ENCODE measurements at regions of chr3 and their contacts with region 1.

Region 1: GRCh38 chr3:9932843-9933560 is 632 bp upstream of the CRELD1 start:
- DNase-seq: peak; percentile 95
- ATAC-seq: peak; percentile 78
- H3K4me3 Mint-ChIP-seq: peak overlapping the region; percentile 83
- H3K27ac Mint-ChIP-seq: peak overlapping the region; percentile 91
- H3K4me1 Mint-ChIP-seq: peaks cover 32% of the 10 kb centered on the region
- H3K27me3 Mint-ChIP-seq: no peaks in the 10 kb centered on the region
- CTCF ChIP-seq: peak; percentile 85

Region 2: GRCh38 chr3:9649791-9650521 is 283.0 kb before region 1 on chr3:
- CTCF ChIA-PET with region 1: no interaction called
- POLR2A ChIA-PET with region 1: no interaction called
- intact Hi-C with region 1: no loop called
- DNase-seq: no peak
- ATAC-seq: no peak
- H3K4me3 Mint-ChIP-seq: peak overlapping the region; percentile 87
- H3K27ac Mint-ChIP-seq: peak overlapping the region; percentile 94
- H3K4me1 Mint-ChIP-seq: peaks cover 26% of the 10 kb centered on the region
- H3K27me3 Mint-ChIP-seq: no peaks in the 10 kb centered on the region
- CTCF ChIP-seq: no peak

Region 3: DNA sequence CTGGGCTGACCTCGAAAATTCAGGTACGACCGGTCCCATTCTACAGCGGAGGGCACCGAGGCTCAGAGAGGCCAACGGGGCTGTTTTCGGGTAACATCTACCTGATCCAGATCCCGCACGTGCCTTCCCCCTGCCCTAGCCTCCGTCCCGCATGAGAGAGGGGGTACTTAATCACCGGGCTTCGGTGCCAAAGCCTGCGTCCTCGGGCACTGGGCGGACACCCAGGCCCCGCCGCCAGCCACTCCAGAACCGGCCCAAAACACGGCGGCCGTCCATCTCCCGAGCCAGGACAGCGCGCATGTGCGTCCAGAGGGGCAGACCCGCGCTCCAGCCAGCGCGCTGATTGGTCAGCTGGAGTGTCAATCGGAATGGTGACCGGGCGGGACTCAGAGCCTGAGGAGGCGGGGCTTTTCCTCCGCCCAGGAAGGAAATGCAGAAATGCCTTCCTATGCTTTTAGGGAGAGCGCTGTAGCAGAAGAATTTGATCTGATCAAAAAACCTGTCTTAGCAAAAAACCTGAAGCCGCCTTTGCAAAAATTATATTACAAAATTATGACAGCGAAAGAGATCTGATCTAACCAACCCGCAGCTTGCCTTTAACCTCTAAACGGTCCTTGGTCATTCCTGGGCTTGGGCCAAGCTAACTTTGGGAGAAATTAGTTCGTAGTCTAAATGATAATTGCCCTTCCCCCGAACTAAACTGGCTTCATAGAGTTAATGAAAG is 89.1 kb before region 1 on chr3 and contains the start of gene RPUSD3:
- CTCF ChIA-PET with region 1: interaction called, 21 read pairs
- POLR2A ChIA-PET with region 1: interaction called, 3 read pairs
- intact Hi-C with region 1: loop called (anchors 5 kb)
- DNase-seq: peak; percentile 97
- ATAC-seq: peak; percentile 99
- H3K4me3 Mint-ChIP-seq: peak within 1 kb of the TSS; percentile 98
- H3K27ac Mint-ChIP-seq: peak within 1 kb of the TSS; percentile 95
- H3K4me1 Mint-ChIP-seq: peaks cover 26% of the 10 kb centered on the region
- H3K27me3 Mint-ChIP-seq: no peaks in the 10 kb centered on the region
- CTCF ChIP-seq: no peak
- total RNA-seq, gene RPUSD3: 78.8 to 83.5 TPM

Region 4: DNA sequence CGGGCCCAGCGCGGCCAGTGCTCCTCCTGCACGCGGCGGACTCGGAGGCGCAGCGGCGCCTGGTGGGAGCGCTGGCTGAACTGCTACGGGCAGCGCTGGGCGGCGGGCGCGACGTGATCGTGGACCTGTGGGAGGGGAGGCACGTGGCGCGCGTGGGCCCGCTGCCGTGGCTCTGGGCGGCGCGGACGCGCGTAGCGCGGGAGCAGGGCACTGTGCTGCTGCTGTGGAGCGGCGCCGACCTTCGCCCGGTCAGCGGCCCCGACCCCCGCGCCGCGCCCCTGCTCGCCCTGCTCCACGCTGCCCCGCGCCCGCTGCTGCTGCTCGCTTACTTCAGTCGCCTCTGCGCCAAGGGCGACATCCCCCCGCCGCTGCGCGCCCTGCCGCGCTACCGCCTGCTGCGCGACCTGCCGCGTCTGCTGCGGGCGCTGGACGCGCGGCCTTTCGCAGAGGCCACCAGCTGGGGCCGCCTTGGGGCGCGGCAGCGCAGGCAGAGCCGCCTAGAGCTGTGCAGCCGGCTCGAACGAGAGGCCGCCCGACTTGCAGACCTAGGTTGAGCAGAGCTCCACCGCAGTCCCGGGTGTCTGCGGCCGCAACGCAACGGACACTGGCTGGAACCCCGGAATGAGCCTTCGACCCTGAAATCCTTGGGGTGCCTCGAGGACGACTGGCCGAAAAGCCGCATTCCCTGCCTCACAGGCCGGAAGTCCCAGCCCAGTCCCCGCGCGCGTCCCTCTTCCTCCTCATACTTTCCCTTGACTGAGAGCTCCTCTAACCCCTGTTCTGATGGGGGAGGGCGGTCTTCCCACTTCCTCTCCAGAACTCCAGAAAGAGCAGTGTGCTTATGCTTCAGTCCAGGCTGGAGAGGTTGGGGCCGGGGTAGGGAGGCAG is 17.5 kb before region 1 on chr3:
- CTCF ChIA-PET with region 1: interaction called, 46 read pairs
- POLR2A ChIA-PET with region 1: interaction called, 7 read pairs
- intact Hi-C with region 1: no loop called
- DNase-seq: peak; percentile 32
- ATAC-seq: peak; percentile 34
- H3K4me3 Mint-ChIP-seq: peak overlapping the region; percentile 70
- H3K27ac Mint-ChIP-seq: peak overlapping the region; percentile 25
- H3K4me1 Mint-ChIP-seq: peaks cover 17% of the 10 kb centered on the region
- H3K27me3 Mint-ChIP-seq: peaks cover 6% of the 10 kb centered on the region
- CTCF ChIP-seq: peak; percentile 24

Region 5: GRCh38 chr3:9951962-9952805 is 19.2 kb after region 1 on chr3 and contains the start of gene PRRT3:
- CTCF ChIA-PET with region 1: interaction called, 42 read pairs
- POLR2A ChIA-PET with region 1: interaction called, 36 read pairs
- intact Hi-C with region 1: no loop called
- DNase-seq: peak; percentile 81
- ATAC-seq: peak; percentile 87
- H3K4me3 Mint-ChIP-seq: peak within 1 kb of the TSS; percentile 84
- H3K27ac Mint-ChIP-seq: peak within 1 kb of the TSS; percentile 80
- H3K4me1 Mint-ChIP-seq: peaks cover 13% of the 10 kb centered on the region
- H3K27me3 Mint-ChIP-seq: no peaks in the 10 kb centered on the region
- CTCF ChIP-seq: no peak
- total RNA-seq, gene PRRT3: 5.6 to 5.7 TPM

Region 6: DNA sequence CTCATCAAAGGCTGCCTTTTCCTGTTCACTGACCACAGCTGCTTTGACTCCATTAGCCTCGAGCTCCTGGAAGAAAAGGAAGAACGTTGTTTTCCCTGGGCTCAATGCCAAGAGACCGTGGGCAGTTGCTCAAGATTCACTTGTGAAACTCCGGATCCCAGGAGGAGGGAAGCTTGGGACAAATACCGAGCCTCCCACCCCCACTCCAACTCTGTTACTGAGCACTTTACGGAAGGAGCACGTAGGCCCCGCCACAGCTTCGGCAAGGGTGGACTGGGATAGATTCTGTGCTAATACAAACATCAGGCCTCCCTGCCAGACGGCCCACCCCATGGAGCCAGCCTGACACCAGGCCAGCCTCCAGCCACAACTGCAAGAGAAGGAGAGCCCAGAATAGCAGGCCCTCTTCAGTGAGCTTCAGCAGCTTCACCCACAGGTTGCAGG is 82.5 kb after region 1 on chr3:
- CTCF ChIA-PET with region 1: interaction called, 22 read pairs
- POLR2A ChIA-PET with region 1: no interaction called
- intact Hi-C with region 1: no loop called
- DNase-seq: no peak
- ATAC-seq: no peak
- H3K4me3 Mint-ChIP-seq: no peak overlapping the region
- H3K27ac Mint-ChIP-seq: no peak overlapping the region
- H3K4me1 Mint-ChIP-seq: peaks cover 10% of the 10 kb centered on the region
- H3K27me3 Mint-ChIP-seq: peaks cover under 1% of the 10 kb centered on the region
- CTCF ChIP-seq: no peak

Region 7: GRCh38 chr3:10357592-10358308 is 424.7 kb after region 1 on chr3:
- CTCF ChIA-PET with region 1: no interaction called
- POLR2A ChIA-PET with region 1: no interaction called
- intact Hi-C with region 1: no loop called
- DNase-seq: no peak
- ATAC-seq: no peak
- H3K4me3 Mint-ChIP-seq: no peak overlapping the region
- H3K27ac Mint-ChIP-seq: no peak overlapping the region
- H3K4me1 Mint-ChIP-seq: no peaks in the 10 kb centered on the region
- H3K27me3 Mint-ChIP-seq: peaks cover 7% of the 10 kb centered on the region
- CTCF ChIP-seq: no peak